ENCODE measurements at regions of chr18 and their contacts with region 1.

Region 1: GRCh38 chr18:9516437-9517064 is 41.2 kb downstream of the RALBP1 start:
- DNase-seq: no peak
- H3K4me3 ChIP-seq: no peak overlapping the region
- H3K27ac ChIP-seq: peak overlapping the region in 26 of 59 donors; percentile 0 to 72 (median 28)
- H3K27me3 ChIP-seq: no peaks in the 10 kb centered on the region
- CTCF ChIP-seq: peak; percentile 56 to 89 (median 78)

Region 2: GRCh38 chr18:9082711-9083510 is 433.6 kb before region 1 on chr18:
- intact Hi-C with region 1: loop called in 1 of 2 experiments (anchors 10 kb)
- DNase-seq: no peak
- H3K4me3 ChIP-seq: no peak overlapping the region
- H3K27ac ChIP-seq: peak overlapping the region in 30 of 59 donors; percentile 2 to 68 (median 40)
- H3K27me3 ChIP-seq: no peaks in the 10 kb centered on the region
- CTCF ChIP-seq: no peak

Region 3: GRCh38 chr18:9334329-9334972 is 182.1 kb before region 1 on chr18 and contains the start of gene TWSG1:
- intact Hi-C with region 1: loop called in 1 of 2 experiments (anchors 10 kb)
- DNase-seq: peak; percentile 76 to 91 (median 88)
- H3K4me3 ChIP-seq: peak within 1 kb of the TSS; percentile 61 to 94 (median 87)
- H3K27ac ChIP-seq: peak within 1 kb of the TSS in 57 of 59 donors; percentile 39 to 93 (median 79)
- H3K27me3 ChIP-seq: no peaks in the 10 kb centered on the region
- CTCF ChIP-seq: peak in 52 of 56 donors; percentile 19 to 74 (median 46)
- total RNA-seq, gene TWSG1: 12.6 to 27.0 (median 18.1) TPM

Region 4: GRCh38 chr18:9366192-9366591 is 150.4 kb before region 1 on chr18:
- intact Hi-C with region 1: loop called in 1 of 2 experiments (anchors 10 kb)
- DNase-seq: peak in 3 of 10 donors; percentile 32 to 75 (median 40)
- H3K4me3 ChIP-seq: peak overlapping the region in 1 of 59 donors; percentile 14
- H3K27ac ChIP-seq: peak overlapping the region in 4 of 59 donors; percentile 2 to 35 (median 14)
- H3K27me3 ChIP-seq: no peaks in the 10 kb centered on the region
- CTCF ChIP-seq: peak in 43 of 56 donors; percentile 12 to 60 (median 35)

Region 5: DNA sequence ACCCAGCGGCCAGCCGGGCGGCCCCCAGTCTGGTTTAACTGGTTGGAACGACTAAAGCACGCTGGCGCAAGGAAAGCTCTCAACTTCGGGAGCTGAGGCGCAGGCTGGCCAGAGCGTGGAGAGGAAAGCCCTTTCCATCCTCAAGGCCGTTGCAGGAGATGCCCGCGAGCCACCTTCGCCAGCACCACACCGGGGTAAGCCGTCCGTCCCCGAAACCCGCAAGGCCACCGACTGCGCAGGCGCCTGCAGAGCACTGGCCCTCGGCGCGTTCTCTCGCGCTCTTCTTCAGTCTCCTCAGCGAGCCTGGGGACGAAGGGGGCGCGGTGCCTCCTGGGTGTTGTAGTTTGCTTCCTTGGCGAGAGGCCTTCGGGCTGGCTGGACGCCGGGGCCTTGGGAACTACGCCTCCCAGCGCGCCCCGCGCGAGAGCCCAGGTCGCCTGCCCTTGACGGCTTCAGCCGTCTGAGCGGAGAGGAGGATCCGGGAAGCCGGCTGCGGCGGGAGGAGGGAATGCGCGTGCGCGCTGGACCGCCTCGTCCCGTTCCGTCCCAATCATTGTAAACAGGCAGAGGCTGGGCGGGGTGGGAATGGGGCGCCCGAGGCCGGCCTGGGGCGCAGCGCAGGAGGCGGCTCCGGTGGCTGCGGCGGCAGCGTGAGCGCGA is 41.4 kb before region 1 on chr18 and contains the start of gene RALBP1:
- intact Hi-C with region 1: loop called in 1 of 2 experiments (anchors 5 kb)
- DNase-seq: peak; percentile 98 to 100 (median 100)
- H3K4me3 ChIP-seq: peak within 1 kb of the TSS; percentile 64 to 99 (median 95)
- H3K27ac ChIP-seq: peak within 1 kb of the TSS; percentile 86 to 99 (median 95)
- H3K27me3 ChIP-seq: no peaks in the 10 kb centered on the region
- CTCF ChIP-seq: peak in 50 of 56 donors; percentile 9 to 57 (median 38)
- total RNA-seq, gene RALBP1: 44.6 to 89.8 (median 64.5) TPM

Measured in dorsolateral prefrontal cortex (tissue), 120 donors.